ENCODE measurements at regions of chr6 and their contacts with region 1.

Region 1: GRCh38 chr6:122530440-122531046 is 58.9 kb upstream of the SERINC1 start:
- DNase-seq: peak; percentile 71
- H3K4me3 Mint-ChIP-seq: no peak overlapping the region
- H3K27ac Mint-ChIP-seq: no peak overlapping the region
- H3K4me1 Mint-ChIP-seq: peaks cover 2% of the 10 kb centered on the region
- H3K27me3 Mint-ChIP-seq: peaks cover 33% of the 10 kb centered on the region

Region 2: GRCh38 chr6:122491919-122492555 is 38.5 kb before region 1 on chr6:
- CTCF ChIA-PET with region 1: interaction called, 20 read pairs
- POLR2A ChIA-PET with region 1: no interaction called
- DNase-seq: peak; percentile 79
- H3K4me3 Mint-ChIP-seq: no peak overlapping the region
- H3K27ac Mint-ChIP-seq: no peak overlapping the region
- H3K4me1 Mint-ChIP-seq: peaks cover 20% of the 10 kb centered on the region
- H3K27me3 Mint-ChIP-seq: peaks cover 5% of the 10 kb centered on the region

Region 3: GRCh38 chr6:122511193-122511924 is 19.2 kb before region 1 on chr6:
- CTCF ChIA-PET with region 1: interaction called, 15 read pairs
- POLR2A ChIA-PET with region 1: no interaction called
- DNase-seq: no peak
- H3K4me3 Mint-ChIP-seq: no peak overlapping the region
- H3K27ac Mint-ChIP-seq: no peak overlapping the region
- H3K4me1 Mint-ChIP-seq: no peaks in the 10 kb centered on the region
- H3K27me3 Mint-ChIP-seq: no peaks in the 10 kb centered on the region

Region 4: GRCh38 chr6:122620879-122621278 is 90.3 kb after region 1 on chr6:
- CTCF ChIA-PET with region 1: no interaction called
- POLR2A ChIA-PET with region 1: no interaction called
- DNase-seq: no peak
- H3K4me3 Mint-ChIP-seq: no peak overlapping the region
- H3K27ac Mint-ChIP-seq: no peak overlapping the region
- H3K4me1 Mint-ChIP-seq: no peaks in the 10 kb centered on the region
- H3K27me3 Mint-ChIP-seq: peaks cover 6% of the 10 kb centered on the region

Measured in activated CD4-positive, alpha-beta T cell treated with anti-CD3 and anti-CD28 coated beads, Interleukin-2, amount 10 ng/mL, durations not matched to agents 7 days and 5 days (primary cell).